PC-9 (cell line): ENCODE measurements at regions of chr2 and their contacts with region 1.

Region 1: DNA sequence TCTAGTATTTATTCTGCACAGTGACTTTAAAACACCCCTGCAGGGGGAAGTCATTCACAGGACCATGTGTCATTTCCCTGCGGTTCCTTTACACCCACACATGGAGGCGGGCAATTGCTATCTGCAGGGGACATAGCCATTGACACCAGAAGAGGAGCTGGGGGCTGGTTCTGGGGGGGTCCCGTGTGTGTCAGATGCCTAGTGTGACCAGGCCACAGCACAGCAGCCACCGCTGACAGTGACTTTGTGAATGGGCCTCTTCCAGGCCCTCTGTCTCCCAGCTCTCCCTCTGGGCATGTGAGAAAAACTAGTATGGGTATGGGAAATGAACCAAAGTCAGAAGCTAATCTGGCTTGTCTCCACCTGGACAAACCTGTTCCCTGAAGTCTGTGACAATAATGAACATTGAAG is 7.4 kb upstream of the GBX2 start:
- DNase-seq: no peak
- H3K4me3 ChIP-seq: no peak overlapping the region
- H3K27ac ChIP-seq: no peak overlapping the region
- H3K4me1 ChIP-seq: peaks cover 11% of the 10 kb centered on the region
- H3K27me3 ChIP-seq: no peaks in the 10 kb centered on the region
- CTCF ChIP-seq: no peak

Region 2: GRCh38 chr2:235968616-235969324 is 206.8 kb before region 1 on chr2:
- CTCF ChIA-PET with region 1: interaction called, 16 read pairs
- POLR2A ChIA-PET with region 1: no interaction called
- intact Hi-C with region 1: no loop called
- DNase-seq: no peak
- H3K4me3 ChIP-seq: no peak overlapping the region
- H3K27ac ChIP-seq: no peak overlapping the region
- H3K4me1 ChIP-seq: no peaks in the 10 kb centered on the region
- H3K27me3 ChIP-seq: no peaks in the 10 kb centered on the region
- CTCF ChIP-seq: no peak

Region 3: DNA sequence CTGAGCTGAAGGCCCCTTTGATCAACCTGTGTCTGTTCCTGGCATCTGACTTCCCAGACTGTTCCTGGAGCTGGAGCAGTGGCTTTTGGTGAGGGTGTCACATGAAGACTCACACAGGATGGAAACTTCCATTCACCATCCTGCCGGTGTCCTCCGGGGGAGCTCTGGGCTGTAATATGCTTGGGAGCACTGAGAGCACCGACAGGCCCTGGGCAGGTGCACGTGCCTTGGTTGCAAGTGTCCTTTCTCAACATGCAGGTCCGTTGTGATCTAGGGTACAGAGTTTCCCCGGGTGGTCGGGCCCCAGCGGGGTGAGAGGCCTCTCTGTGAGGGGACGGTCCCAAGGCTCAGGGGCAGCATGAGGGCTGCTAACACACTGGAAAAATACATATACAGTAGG is 17.4 kb after region 1 on chr2:
- CTCF ChIA-PET with region 1: interaction called, 4 read pairs
- POLR2A ChIA-PET with region 1: interaction called, 29 read pairs
- intact Hi-C with region 1: no loop called
- DNase-seq: peak in 1 of 2 experiments; percentile 9
- H3K4me3 ChIP-seq: no peak overlapping the region
- H3K27ac ChIP-seq: no peak overlapping the region
- H3K4me1 ChIP-seq: no peaks in the 10 kb centered on the region
- H3K27me3 ChIP-seq: no peaks in the 10 kb centered on the region
- CTCF ChIP-seq: no peak

Region 4: DNA sequence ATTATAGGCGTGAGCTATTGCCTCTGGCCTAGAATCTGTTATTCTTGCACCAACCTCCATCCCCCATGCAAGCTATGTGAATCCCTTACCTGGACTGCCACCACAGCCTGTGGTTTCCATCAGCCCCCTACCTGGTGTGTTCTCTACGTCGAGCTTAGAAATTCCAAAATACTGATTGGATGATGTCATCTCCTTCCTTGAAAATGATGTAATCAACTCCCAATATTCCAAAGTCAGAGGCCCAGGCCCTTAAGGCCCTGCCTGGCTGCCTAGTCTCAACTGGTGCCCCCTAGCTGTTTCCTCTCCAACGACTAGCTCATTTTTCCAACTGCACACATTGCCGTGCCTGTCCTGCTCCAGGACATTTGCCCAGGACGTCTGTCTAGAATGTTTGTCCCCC is 33.9 kb after region 1 on chr2:
- CTCF ChIA-PET with region 1: no interaction called
- POLR2A ChIA-PET with region 1: interaction called, 14 read pairs
- intact Hi-C with region 1: no loop called
- DNase-seq: peak in 1 of 2 experiments; percentile 33
- H3K4me3 ChIP-seq: no peak overlapping the region
- H3K27ac ChIP-seq: no peak overlapping the region
- H3K4me1 ChIP-seq: no peaks in the 10 kb centered on the region
- H3K27me3 ChIP-seq: no peaks in the 10 kb centered on the region
- CTCF ChIP-seq: no peak